ENCODE measurements at regions of chr12 and their contacts with region 1.

Region 1: DNA sequence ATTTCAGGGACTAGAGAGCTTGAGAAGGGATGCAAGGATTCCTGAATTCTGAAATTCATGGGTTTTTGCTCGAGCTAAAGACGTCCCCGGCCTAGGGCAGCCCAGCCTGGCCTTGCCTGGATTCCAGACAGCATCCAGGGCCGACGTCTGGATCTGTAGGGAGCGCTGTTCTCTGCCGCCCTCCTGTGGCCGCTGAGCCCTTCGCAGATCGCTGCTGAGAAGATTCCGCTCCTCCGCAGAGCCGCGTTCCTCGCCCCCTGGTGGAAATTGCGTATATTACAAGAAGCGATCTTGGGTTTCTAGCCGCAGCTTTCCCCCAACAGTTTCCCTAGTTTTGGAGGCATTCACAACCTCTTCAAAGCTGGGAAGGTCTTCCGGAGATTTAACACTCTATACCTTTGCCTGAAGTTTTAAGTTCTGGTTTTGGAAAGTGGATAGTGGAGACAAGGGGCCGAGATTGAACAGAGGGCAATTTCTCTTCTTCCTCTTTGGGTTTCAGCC is 5.1 kb downstream of the CISTR start:
- DNase-seq: peak; percentile 95
- H3K4me3 Mint-ChIP-seq: no peak overlapping the region
- H3K27ac Mint-ChIP-seq: no peak overlapping the region
- H3K4me1 Mint-ChIP-seq: no peaks in the 10 kb centered on the region
- H3K27me3 Mint-ChIP-seq: no peaks in the 10 kb centered on the region
- CTCF ChIP-seq: peak; percentile 95

Region 2: GRCh38 chr12:53500776-53501614 is 245.6 kb before region 1 on chr12 and contains the start of gene TARBP2:
- CTCF ChIA-PET with region 1: no interaction called
- intact Hi-C with region 1: no loop called
- DNase-seq: peak; percentile 93
- H3K4me3 Mint-ChIP-seq: peak within 1 kb of the TSS; percentile 76
- H3K27ac Mint-ChIP-seq: peak within 1 kb of the TSS; percentile 62
- H3K4me1 Mint-ChIP-seq: peaks cover 25% of the 10 kb centered on the region
- H3K27me3 Mint-ChIP-seq: peaks cover 10% of the 10 kb centered on the region
- CTCF ChIP-seq: no peak
- total RNA-seq, gene TARBP2: 20.7 and 21.8 TPM in 2 replicates

Region 3: DNA sequence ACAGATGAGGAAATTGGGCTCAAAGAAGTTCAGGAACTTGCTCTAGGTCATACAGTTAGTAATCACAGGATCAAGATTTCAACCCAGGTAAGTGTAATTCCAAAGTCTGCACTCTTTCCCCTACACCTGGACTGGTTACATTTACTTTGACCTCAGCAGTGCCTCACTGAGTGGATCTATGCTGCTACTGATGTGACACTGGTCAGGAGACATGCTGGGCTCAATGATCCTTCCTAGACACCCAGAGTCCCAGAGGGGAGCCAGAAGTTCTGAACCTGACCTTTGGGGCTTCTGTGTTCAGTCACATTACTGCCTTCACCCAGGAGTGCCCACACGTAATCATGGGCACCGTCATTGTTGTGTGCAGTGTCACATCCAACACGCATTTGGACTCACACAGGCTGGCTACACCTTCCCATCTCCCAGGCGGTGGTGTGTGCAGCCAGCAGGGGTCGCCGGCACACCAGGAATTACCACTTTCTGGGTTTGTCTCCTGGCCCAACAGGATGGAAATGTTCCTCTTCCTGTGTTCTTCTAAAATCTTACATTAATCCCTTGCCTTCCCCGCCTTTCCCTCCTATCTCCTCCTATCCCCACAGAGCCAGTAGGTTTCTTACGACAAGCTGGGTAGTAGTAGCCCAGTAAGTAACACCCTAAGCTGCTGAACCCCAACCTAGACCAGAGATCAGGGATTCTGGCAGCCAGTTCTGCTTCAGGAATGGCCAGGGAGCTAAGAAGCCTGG is 45.0 kb before region 1 on chr12:
- CTCF ChIA-PET with region 1: interaction called, 13 read pairs
- intact Hi-C with region 1: loop called (anchors 1 kb)
- DNase-seq: peak; percentile 89
- H3K4me3 Mint-ChIP-seq: no peak overlapping the region
- H3K27ac Mint-ChIP-seq: no peak overlapping the region
- H3K4me1 Mint-ChIP-seq: no peaks in the 10 kb centered on the region
- H3K27me3 Mint-ChIP-seq: peaks cover 98% of the 10 kb centered on the region
- CTCF ChIP-seq: peak; percentile 83

Region 4: DNA sequence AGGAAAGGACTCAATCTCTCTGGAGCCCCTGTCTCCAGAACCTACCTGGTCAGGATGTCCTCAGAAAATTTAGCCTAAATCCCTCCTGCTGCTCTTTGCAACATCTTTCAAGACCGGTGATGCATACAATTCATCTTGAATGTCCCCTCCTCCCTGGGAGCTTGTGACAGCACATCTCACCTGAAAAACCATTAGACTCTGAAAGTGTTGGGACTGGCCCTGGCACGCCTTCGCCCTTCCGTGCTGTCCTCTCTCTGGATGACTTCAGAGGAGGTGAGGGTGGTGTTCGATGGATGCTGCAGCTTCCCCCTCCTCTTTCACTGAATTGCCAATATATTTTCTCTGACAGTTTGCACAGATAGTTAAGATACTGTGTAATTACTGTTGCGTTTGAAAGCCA is 96.0 kb after region 1 on chr12:
- CTCF ChIA-PET with region 1: no interaction called
- intact Hi-C with region 1: no loop called
- DNase-seq: no peak
- H3K4me3 Mint-ChIP-seq: no peak overlapping the region
- H3K27ac Mint-ChIP-seq: no peak overlapping the region
- H3K4me1 Mint-ChIP-seq: peaks cover 24% of the 10 kb centered on the region
- H3K27me3 Mint-ChIP-seq: peaks cover 18% of the 10 kb centered on the region
- CTCF ChIP-seq: no peak

Measured in Calu3 (cell line).